ENCODE measurements at regions of chr2 and their contacts with region 1.

Region 1: GRCh38 chr2:181396256-181397123 is 60.7 kb upstream of the ITGA4 start:
- DNase-seq: peak; percentile 35
- H3K4me3 ChIP-seq: no peak overlapping the region
- H3K27ac ChIP-seq: no peak overlapping the region
- H3K4me1 ChIP-seq: peaks cover 25% of the 10 kb centered on the region
- H3K27me3 ChIP-seq: no peaks in the 10 kb centered on the region
- CTCF ChIP-seq: no peak

Region 2: DNA sequence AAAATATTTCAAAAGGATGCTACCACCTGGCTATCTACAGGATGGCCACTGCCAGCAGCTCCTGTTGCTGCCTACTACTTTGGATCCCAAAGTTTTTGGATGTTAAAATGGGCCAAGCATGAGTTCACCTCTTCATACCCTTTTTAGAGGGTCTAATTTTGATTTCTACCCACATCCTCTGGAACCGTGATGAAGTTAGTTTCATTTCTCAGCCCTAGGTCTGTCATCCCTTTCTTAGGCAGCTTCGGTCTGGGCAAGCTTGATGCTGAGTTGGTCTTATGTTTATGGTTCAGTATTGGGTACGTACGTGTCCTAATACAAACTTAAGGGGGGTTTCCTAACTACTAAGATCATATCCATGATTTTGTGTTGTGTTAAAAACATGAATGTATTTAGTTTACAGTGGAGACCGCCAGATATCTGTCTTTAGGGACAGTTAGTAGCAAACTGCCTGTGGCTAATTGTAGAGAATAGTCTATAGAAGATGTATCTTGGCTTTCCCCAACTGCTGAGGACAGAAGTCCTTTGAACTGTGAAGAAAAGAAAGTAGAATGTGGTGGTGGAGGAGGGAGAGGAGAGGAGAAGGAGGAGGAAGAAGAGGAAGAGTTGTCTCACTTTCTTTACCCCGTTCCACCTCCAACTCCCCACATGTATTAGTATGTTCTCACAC is 231.2 kb before region 1 on chr2:
- CTCF ChIA-PET with region 1: interaction called, 12 read pairs
- POLR2A ChIA-PET with region 1: no interaction called
- intact Hi-C with region 1: no loop called
- DNase-seq: no peak
- H3K4me3 ChIP-seq: no peak overlapping the region
- H3K27ac ChIP-seq: no peak overlapping the region
- H3K4me1 ChIP-seq: no peaks in the 10 kb centered on the region
- H3K27me3 ChIP-seq: no peaks in the 10 kb centered on the region
- CTCF ChIP-seq: no peak

Region 3: GRCh38 chr2:181438261-181438660 is 41.8 kb after region 1 on chr2:
- CTCF ChIA-PET with region 1: no interaction called
- POLR2A ChIA-PET with region 1: interaction called, 13 read pairs
- intact Hi-C with region 1: no loop called
- DNase-seq: peak; percentile 15
- H3K4me3 ChIP-seq: no peak overlapping the region
- H3K27ac ChIP-seq: no peak overlapping the region
- H3K4me1 ChIP-seq: no peaks in the 10 kb centered on the region
- H3K27me3 ChIP-seq: no peaks in the 10 kb centered on the region
- CTCF ChIP-seq: peak; percentile 38; the same call in 1 of the 2 replicates